HAP-1 (cell line): ENCODE measurements at regions of chr1 and their contacts with region 1.

Region 1: GRCh38 chr1:15803354-15803753 is 4.1 kb downstream of the UQCRHL start:
- DNase-seq: peak; percentile 55 to 61
- H3K4me3 ChIP-seq: no peak overlapping the region
- H3K4me1 ChIP-seq: peaks cover 3% of the 10 kb centered on the region; the same call in 1 of the 2 replicates
- H3K27me3 ChIP-seq: no peaks in the 10 kb centered on the region

Region 2: DNA sequence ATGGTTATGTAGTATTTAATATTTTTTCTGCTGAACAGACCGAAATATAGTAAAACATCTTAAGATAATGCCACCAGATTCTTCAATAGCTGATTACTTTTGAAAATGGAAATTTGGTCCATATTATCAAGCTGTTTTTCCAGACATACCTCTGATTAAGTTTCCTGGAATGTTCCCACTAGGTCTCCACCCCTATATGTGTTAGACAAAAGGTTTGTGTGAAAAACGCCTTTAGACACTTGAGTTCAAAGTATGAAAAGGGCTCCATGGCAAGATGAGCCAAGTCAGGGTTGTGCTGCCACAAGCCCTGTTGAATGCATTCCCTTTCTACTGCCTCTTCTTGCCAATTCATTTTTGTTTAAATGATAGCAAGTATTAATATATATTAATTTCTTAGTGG is 119.9 kb after region 1 on chr1:
- in situ Hi-C with region 1: loop called (anchors 10 kb)
- DNase-seq: no peak
- H3K4me3 ChIP-seq: no peak overlapping the region
- H3K4me1 ChIP-seq: no peaks in the 10 kb centered on the region
- H3K27me3 ChIP-seq: no peaks in the 10 kb centered on the region